ENCODE measurements at regions of chr22 and their contacts with region 1.

Region 1: GRCh38 chr22:46774253-46774979 is 12.0 kb downstream of the TBC1D22A start:
- DNase-seq: no peak
- ATAC-seq: peak; percentile 48
- H3K4me3 ChIP-seq: peak overlapping the region; percentile 58 to 77 (median 64)
- H3K27ac ChIP-seq: peak overlapping the region; percentile 82
- H3K4me1 ChIP-seq: peaks cover 46% of the 10 kb centered on the region
- H3K27me3 ChIP-seq: no peaks in the 10 kb centered on the region
- CTCF ChIP-seq: no peak
- EP300 ChIP-seq: no peak
- POLR2A ChIP-seq: no peak
- RAD21 ChIP-seq: no peak

Region 2: GRCh38 chr22:46399251-46399999 is 375.0 kb before region 1 on chr22:
- CTCF ChIA-PET with region 1: no interaction called
- POLR2A ChIA-PET with region 1: no interaction called
- in situ Hi-C with region 1: no loop called
- intact Hi-C with region 1: loop called (anchors 5 kb)
- DNase-seq: no peak
- ATAC-seq: no peak
- H3K4me3 ChIP-seq: no peak overlapping the region
- H3K27ac ChIP-seq: no peak overlapping the region
- H3K4me1 ChIP-seq: no peaks in the 10 kb centered on the region
- H3K27me3 ChIP-seq: no peaks in the 10 kb centered on the region; a peak in 1 of 5 replicates
- CTCF ChIP-seq: peak; percentile 61
- EP300 ChIP-seq: no peak
- POLR2A ChIP-seq: no peak
- RAD21 ChIP-seq: no peak

Region 3: GRCh38 chr22:46542011-46542985 is 232.1 kb before region 1 on chr22:
- CTCF ChIA-PET with region 1: no interaction called
- POLR2A ChIA-PET with region 1: no interaction called
- in situ Hi-C with region 1: no loop called
- intact Hi-C with region 1: no loop called
- DNase-seq: peak; percentile 45
- ATAC-seq: peak; percentile 98
- H3K4me3 ChIP-seq: no peak overlapping the region; a peak in 1 of 6 replicates
- H3K27ac ChIP-seq: no peak overlapping the region
- H3K4me1 ChIP-seq: peaks cover 44% of the 10 kb centered on the region
- H3K27me3 ChIP-seq: peaks cover 4 to 24% of the 10 kb centered on the region in 2 experiments
- CTCF ChIP-seq: peak; percentile 99
- EP300 ChIP-seq: 0 out of 4 replicates have a peak, but pooled peaks of 1 of the 2 experiments have one; percentile 36
- POLR2A ChIP-seq: no peak
- RAD21 ChIP-seq: peak; percentile 96

Region 4: DNA sequence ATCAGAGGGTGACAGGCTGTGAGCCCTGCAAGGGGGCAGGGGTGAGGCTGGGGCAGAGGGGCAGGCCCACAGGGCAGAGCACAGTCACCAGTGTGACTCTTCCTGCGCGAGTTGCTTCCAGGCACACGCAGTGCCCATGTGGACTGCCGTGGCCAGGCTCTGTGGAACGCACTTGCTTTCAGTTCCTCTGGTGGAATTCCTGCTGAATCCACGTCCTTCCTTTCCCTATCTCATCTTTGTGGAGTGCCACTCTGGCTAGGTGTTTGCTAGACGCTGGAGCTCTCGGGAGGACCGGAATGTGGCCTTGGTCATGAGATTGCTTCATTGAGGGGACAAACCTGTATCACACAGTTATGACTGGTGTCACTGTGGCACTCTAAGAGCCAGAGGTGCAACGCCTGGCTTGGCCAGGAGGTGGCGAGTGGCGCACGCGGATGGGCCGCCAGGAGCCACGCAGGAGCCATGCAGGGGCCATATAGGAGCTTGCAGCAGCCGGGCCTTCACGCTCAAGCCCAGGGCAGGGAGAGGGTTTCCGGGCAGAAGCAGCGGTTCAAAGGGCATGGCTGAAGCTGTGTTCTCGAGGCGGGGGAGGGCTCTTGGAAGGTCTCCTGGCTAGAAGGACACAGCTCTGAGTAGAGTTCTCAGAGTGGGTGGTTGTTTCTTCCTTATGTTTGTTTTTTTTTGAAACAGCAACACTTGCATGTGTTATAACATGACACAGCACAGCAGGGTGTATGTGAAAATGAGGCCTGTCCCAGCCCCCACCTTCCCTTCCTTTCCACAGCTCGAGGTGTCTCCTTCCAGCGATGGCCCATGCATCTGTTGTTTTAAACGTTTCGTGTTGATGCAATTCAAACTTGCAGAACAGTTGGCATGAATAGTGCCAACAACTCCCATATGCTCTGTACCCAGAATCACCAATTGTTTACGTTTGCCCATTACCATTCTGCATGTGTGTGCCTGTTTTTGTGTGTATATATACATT is 24.2 kb after region 1 on chr22:
- CTCF ChIA-PET with region 1: interaction called, 3 read pairs
- POLR2A ChIA-PET with region 1: interaction called, 16 read pairs
- in situ Hi-C with region 1: no loop called
- intact Hi-C with region 1: loop called (anchors 2 kb)
- DNase-seq: peak; percentile 92
- ATAC-seq: peak; percentile 95
- H3K4me3 ChIP-seq: no peak overlapping the region
- H3K27ac ChIP-seq: peak overlapping the region; percentile 56
- H3K4me1 ChIP-seq: peaks cover 57% of the 10 kb centered on the region
- H3K27me3 ChIP-seq: no peaks in the 10 kb centered on the region
- CTCF ChIP-seq: peak; percentile 100
- EP300 ChIP-seq: peak in 1 of 2 experiments; percentile 65; a peak in 2 of 4 replicates
- POLR2A ChIP-seq: no peak
- RAD21 ChIP-seq: peak; percentile 98

Region 5: GRCh38 chr22:46806794-46807193 is 32.4 kb after region 1 on chr22:
- CTCF ChIA-PET with region 1: no interaction called
- POLR2A ChIA-PET with region 1: interaction called, 16 read pairs
- in situ Hi-C with region 1: no loop called
- intact Hi-C with region 1: no loop called
- DNase-seq: no peak
- ATAC-seq: no peak
- H3K4me3 ChIP-seq: no peak overlapping the region
- H3K27ac ChIP-seq: peak overlapping the region; percentile 78
- H3K4me1 ChIP-seq: peaks cover 53% of the 10 kb centered on the region
- H3K27me3 ChIP-seq: no peaks in the 10 kb centered on the region
- CTCF ChIP-seq: no peak
- EP300 ChIP-seq: no peak
- POLR2A ChIP-seq: no peak
- RAD21 ChIP-seq: no peak